ENCODE measurements at regions of chr2 and their contacts with region 1.

Region 1: GRCh38 chr2:218898109-218898878 is 17.6 kb downstream of the WNT10A start:
- DNase-seq: peak; percentile 51 to 69 (median 68)
- H3K4me3 ChIP-seq: peak overlapping the region in 3 of 7 experiments; percentile 3 to 72 (median 57)
- H3K27ac ChIP-seq: no peak overlapping the region
- H3K4me1 ChIP-seq: peaks cover 1 to 54% (median 37%) of the 10 kb centered on the region in 4 experiments
- H3K27me3 ChIP-seq: peaks cover 18 to 73% (median 30%) of the 10 kb centered on the region in 5 experiments

Region 2: GRCh38 chr2:218860950-218861381 is 37.3 kb before region 1 on chr2:
- CTCF ChIA-PET with region 1: interaction called, 94 read pairs
- POLR2A ChIA-PET with region 1: no interaction called
- DNase-seq: peak; percentile 59 to 77 (median 72)
- H3K4me3 ChIP-seq: peak overlapping the region in 1 of 7 experiments; percentile 33
- H3K27ac ChIP-seq: no peak overlapping the region
- H3K4me1 ChIP-seq: peaks cover 0 to 24% (median 11%) of the 10 kb centered on the region in 4 experiments
- H3K27me3 ChIP-seq: peaks cover 5 to 87% (median 45%) of the 10 kb centered on the region in 5 experiments

Region 3: DNA sequence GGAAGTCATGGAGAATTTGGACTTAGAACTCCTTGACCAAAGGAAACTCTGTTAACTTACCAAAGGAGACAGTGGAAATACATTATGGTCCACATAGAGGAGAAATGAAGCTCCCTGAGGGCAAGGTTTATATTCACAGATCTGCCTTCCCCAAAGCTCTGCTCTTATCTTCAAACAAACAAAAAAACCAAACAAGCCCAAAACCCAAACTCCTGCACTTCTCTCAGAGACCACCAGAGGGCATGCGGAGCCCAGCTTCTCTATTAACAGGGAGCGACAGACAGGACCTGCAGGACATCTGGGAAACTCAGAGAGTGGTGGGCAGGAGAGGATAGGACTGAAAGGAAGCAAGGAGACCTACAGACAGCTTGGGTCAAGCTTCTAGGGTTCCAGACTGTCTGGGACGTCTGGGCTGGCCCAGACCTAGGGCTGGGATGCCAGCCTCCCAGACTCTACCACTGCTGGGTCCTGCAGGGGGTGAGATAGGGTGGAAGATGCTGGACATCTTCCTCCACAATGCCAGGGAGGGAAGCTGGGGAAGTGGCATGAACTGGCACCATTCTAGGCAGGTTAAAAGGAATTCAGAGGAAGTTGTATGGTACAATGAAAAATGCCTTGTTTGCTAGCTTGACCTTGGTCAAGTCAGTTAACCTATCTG is 21.6 kb before region 1 on chr2:
- CTCF ChIA-PET with region 1: interaction called, 923 read pairs
- POLR2A ChIA-PET with region 1: interaction called, 19 read pairs
- DNase-seq: peak; percentile 68 to 84 (median 74)
- H3K4me3 ChIP-seq: no peak overlapping the region
- H3K27ac ChIP-seq: no peak overlapping the region
- H3K4me1 ChIP-seq: peaks cover 0 to 42% (median 24%) of the 10 kb centered on the region in 4 experiments
- H3K27me3 ChIP-seq: peaks cover 13 to 99% (median 61%) of the 10 kb centered on the region in 5 experiments

Measured in common myeloid progenitor, CD34-positive (primary cell).